Ovary (tissue), 10 donors: ENCODE measurements at regions of chr7 and their contacts with region 1.

Region 1: GRCh38 chr7:120201290-120201689 is 71.7 kb upstream of the KCND2 start:
- DNase-seq: no peak
- H3K4me3 ChIP-seq: no peak overlapping the region
- H3K27ac ChIP-seq: no peak overlapping the region
- H3K4me1 ChIP-seq: no peaks in the 10 kb centered on the region
- H3K27me3 ChIP-seq: no peaks in the 10 kb centered on the region
- CTCF ChIP-seq: no peak
- EP300 ChIP-seq: no peak
- POLR2A ChIP-seq: no peak

Region 2: DNA sequence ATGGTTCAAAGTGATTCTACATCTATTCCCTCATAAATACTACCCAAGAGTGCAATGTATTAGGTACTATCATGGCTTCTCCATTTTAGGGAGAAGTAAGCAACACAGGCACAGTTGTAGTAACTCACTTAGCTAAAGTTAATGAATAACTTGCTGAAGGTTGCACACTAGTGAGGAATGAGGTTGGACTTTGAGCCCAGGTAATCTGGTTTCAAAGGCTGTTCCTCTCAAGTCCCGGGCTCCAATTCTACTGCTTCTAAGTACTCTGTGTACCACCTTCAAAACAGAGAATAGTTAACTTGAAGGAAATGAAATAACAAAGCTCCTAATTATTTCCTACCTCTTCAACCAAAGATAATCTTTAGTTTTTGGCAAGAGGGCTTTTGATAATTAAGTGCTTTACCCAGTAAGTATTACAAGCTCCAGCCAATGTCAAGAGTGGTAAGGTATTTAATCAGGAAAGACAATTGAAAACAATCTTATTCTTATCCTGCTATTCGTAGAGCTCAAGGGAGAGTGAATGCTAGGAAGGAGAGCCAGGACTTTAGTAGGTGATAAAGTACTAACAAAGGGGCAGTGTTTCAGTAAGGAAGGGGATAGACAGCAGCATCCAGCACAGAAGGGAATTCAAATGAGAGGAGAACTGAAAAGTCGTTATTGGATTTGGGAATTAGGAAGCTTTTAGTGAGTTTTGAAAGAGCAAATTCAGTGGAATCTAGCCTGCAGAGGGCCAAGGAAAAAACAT is 1513.4 kb after region 1 on chr7:
- intact Hi-C with region 1: loop called in 1 of 4 experiments (anchors 5 kb)
- DNase-seq: no peak
- H3K4me3 ChIP-seq: no peak overlapping the region
- H3K27ac ChIP-seq: no peak overlapping the region
- H3K4me1 ChIP-seq: no peaks in the 10 kb centered on the region
- H3K27me3 ChIP-seq: no peaks in the 10 kb centered on the region
- CTCF ChIP-seq: no peak
- EP300 ChIP-seq: no peak
- POLR2A ChIP-seq: no peak